CD4-positive, alpha-beta T cell (primary cell): ENCODE measurements at regions of chr12 and their contacts with region 1.

Region 1: DNA sequence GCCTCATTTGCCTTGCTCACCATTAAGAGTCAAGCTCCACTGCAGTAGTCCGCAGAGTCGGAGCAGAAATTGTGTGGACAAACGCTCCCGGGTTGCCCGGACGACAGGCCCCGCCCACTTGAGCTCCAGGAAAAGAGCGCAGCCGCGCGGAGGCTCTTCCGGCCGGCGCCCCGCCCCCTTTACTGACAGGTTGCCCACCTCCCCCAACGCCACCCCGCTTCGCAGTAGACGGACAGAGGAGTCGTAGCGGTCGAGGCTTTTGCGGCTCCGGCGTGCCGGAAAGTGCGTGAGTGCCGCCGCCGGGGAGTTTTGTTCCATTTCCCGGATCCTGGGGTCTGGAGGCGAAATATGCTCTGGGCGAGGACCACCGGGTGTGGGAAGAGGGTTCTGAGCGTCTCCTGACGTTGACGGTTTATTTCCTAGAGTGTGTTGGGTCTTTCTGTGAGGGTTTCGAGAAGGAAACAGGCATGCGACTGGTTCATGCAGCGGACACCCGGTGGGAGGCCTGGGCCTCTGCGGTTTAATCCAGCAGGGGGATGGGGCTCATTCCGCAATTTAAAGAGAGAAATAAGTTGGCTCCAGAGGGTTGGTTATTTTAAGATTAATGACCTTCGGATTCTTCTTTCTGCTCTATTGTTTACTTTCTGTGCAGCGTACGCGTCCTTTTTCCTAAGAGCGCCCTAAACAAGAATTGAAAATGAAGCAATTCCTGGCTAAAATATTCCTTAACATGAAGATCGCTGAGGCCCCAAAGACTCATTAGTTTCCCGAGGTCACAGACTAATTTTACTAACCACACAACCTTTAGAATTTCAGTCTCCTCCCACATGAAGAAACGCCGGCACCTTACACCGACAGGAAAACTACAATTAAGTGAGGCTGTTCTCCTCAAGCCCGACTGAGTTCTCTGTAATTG is at the starts of genes DNAI7 and ETFRF1:
- DNase-seq: peak; percentile 89 to 98 (median 95)
- ATAC-seq: peak; percentile 94
- H3K4me3 ChIP-seq: peak within 1 kb of the TSS; percentile 90
- H3K4me3 Mint-ChIP-seq: peak within 1 kb of the TSS; percentile 98
- H3K27ac ChIP-seq: peak within 1 kb of the TSS; percentile 92 to 96
- H3K27ac Mint-ChIP-seq: peak within 1 kb of the TSS; percentile 98
- H3K4me1 ChIP-seq: peaks cover 14% of the 10 kb centered on the region
- H3K4me1 Mint-ChIP-seq: peaks cover 51% of the 10 kb centered on the region
- H3K27me3 ChIP-seq: no peaks in the 10 kb centered on the region
- H3K27me3 Mint-ChIP-seq: no peaks in the 10 kb centered on the region
- CTCF ChIP-seq: no peak
- total RNA-seq, gene DNAI7: 0.36 TPM in 1 of 2 experiments, not detected in the other
- total RNA-seq, gene ETFRF1: 32.9 to 39.8 TPM

Region 2: GRCh38 chr12:25151476-25151875 is 43.8 kb before region 1 on chr12:
- CTCF ChIA-PET with region 1: interaction called, 8 read pairs
- POLR2A ChIA-PET with region 1: interaction called, 7 read pairs
- intact Hi-C with region 1: loop called in 1 of 2 experiments (anchors 5 kb)
- DNase-seq: no peak
- ATAC-seq: no peak
- H3K4me3 ChIP-seq: no peak overlapping the region
- H3K4me3 Mint-ChIP-seq: no peak overlapping the region
- H3K27ac ChIP-seq: no peak overlapping the region
- H3K27ac Mint-ChIP-seq: no peak overlapping the region
- H3K4me1 ChIP-seq: no peaks in the 10 kb centered on the region
- H3K4me1 Mint-ChIP-seq: peaks cover 7% of the 10 kb centered on the region
- H3K27me3 ChIP-seq: no peaks in the 10 kb centered on the region
- H3K27me3 Mint-ChIP-seq: no peaks in the 10 kb centered on the region
- CTCF ChIP-seq: no peak

Region 3: DNA sequence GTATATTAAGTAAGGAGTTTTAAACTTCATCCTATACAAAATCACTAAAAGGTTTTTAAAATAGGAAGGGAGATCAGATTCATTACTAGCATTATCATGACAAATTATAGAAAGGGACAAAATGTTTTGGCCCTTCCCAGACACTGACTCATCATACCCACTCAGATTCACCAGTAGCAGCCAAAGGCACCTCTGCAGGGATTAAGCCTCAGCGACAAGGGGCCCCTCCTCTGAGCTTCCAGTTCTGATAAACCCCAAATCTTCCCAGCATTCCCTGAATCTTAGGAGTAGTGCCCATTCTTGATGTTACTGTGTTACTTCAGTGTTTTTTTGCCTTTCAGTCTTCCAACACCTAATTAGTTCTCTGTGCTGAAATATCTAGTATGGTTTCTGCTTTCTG is 40.9 kb after region 1 on chr12:
- CTCF ChIA-PET with region 1: interaction called, 4 read pairs
- POLR2A ChIA-PET with region 1: interaction called, 3 read pairs
- intact Hi-C with region 1: loop called (anchors 5 kb)
- DNase-seq: no peak
- ATAC-seq: no peak
- H3K4me3 ChIP-seq: no peak overlapping the region
- H3K4me3 Mint-ChIP-seq: no peak overlapping the region
- H3K27ac ChIP-seq: no peak overlapping the region
- H3K27ac Mint-ChIP-seq: no peak overlapping the region
- H3K4me1 ChIP-seq: peaks cover 2% of the 10 kb centered on the region
- H3K4me1 Mint-ChIP-seq: peaks cover 28% of the 10 kb centered on the region
- H3K27me3 ChIP-seq: no peaks in the 10 kb centered on the region
- H3K27me3 Mint-ChIP-seq: no peaks in the 10 kb centered on the region
- CTCF ChIP-seq: no peak

Region 4: GRCh38 chr12:25241167-25242020 is 46.1 kb after region 1 on chr12:
- CTCF ChIA-PET with region 1: interaction called, 4 read pairs
- POLR2A ChIA-PET with region 1: interaction called, 3 read pairs
- intact Hi-C with region 1: loop called (anchors 5 kb)
- DNase-seq: peak in 4 of 14 experiments; percentile 1 to 77 (median 74)
- ATAC-seq: peak; percentile 79
- H3K4me3 ChIP-seq: no peak overlapping the region
- H3K4me3 Mint-ChIP-seq: no peak overlapping the region
- H3K27ac ChIP-seq: peak overlapping the region in 1 of 2 donors; percentile 25
- H3K27ac Mint-ChIP-seq: peak overlapping the region; percentile 24
- H3K4me1 ChIP-seq: peaks cover 5% of the 10 kb centered on the region
- H3K4me1 Mint-ChIP-seq: peaks cover 51% of the 10 kb centered on the region
- H3K27me3 ChIP-seq: no peaks in the 10 kb centered on the region
- H3K27me3 Mint-ChIP-seq: no peaks in the 10 kb centered on the region
- CTCF ChIP-seq: peak; percentile 82

Region 5: GRCh38 chr12:26576266-26576665 is 1381.0 kb after region 1 on chr12:
- CTCF ChIA-PET with region 1: no interaction called
- POLR2A ChIA-PET with region 1: no interaction called
- intact Hi-C with region 1: no loop called
- DNase-seq: no peak
- ATAC-seq: no peak
- H3K4me3 ChIP-seq: no peak overlapping the region
- H3K4me3 Mint-ChIP-seq: no peak overlapping the region
- H3K27ac ChIP-seq: no peak overlapping the region
- H3K27ac Mint-ChIP-seq: no peak overlapping the region
- H3K4me1 ChIP-seq: peaks cover 6% of the 10 kb centered on the region
- H3K4me1 Mint-ChIP-seq: peaks cover 24% of the 10 kb centered on the region
- H3K27me3 ChIP-seq: no peaks in the 10 kb centered on the region
- H3K27me3 Mint-ChIP-seq: no peaks in the 10 kb centered on the region
- CTCF ChIP-seq: no peak